PC-3 (cell line): ENCODE measurements at regions of chr9 and their contacts with region 1.

Region 1: GRCh38 chr9:111298731-111299598 is 31.1 kb downstream of the OR2K2 start:
- DNase-seq: peak; percentile 73
- ATAC-seq: peak; percentile 80
- H3K4me3 ChIP-seq: peak overlapping the region; percentile 25; the same call in 1 of the 2 replicates
- H3K27ac ChIP-seq: peak overlapping the region; percentile 75
- H3K4me1 ChIP-seq: peaks cover 19% of the 10 kb centered on the region
- H3K27me3 ChIP-seq: no peaks in the 10 kb centered on the region
- CTCF ChIP-seq: peak; percentile 78

Region 2: DNA sequence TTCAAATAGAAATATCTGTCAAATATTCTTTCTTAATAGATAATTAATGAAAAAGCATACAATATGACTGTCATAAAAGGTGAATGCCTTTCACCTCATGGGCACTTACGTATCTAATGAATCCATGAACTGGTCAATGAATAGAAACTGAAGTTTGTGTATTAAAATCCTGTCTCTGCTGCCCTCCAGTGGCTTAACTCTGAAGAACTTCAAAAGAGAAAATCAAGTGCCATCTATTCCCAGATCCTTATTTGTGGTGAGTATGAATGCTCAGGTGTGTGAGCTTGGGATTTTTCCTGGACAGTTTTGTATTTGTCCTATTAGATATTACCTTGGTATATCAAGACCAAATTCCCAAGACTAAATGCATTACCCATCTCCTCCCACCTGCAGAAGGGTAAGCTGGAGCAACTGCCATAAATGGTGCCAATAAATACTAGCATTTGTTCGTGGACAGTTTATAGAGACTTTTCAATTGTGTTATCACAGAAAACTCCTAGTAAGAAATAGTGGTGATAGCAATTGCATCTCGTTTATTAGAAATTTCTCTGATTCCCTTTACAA is 675.4 kb before region 1 on chr9:
- CTCF ChIA-PET with region 1: no interaction called
- POLR2A ChIA-PET with region 1: no interaction called
- intact Hi-C with region 1: loop called (anchors 5 kb)
- DNase-seq: peak; percentile 79
- ATAC-seq: peak; percentile 56
- H3K4me3 ChIP-seq: no peak overlapping the region
- H3K27ac ChIP-seq: no peak overlapping the region
- H3K4me1 ChIP-seq: peaks cover 13% of the 10 kb centered on the region
- H3K27me3 ChIP-seq: no peaks in the 10 kb centered on the region
- CTCF ChIP-seq: peak; percentile 70

Region 3: GRCh38 chr9:110744753-110745384 is 554.1 kb before region 1 on chr9:
- CTCF ChIA-PET with region 1: no interaction called
- POLR2A ChIA-PET with region 1: no interaction called
- intact Hi-C with region 1: loop called (anchors 2 kb)
- DNase-seq: peak; percentile 91
- ATAC-seq: peak; percentile 86
- H3K4me3 ChIP-seq: peak overlapping the region; percentile 42; the same call in 1 of the 2 replicates
- H3K27ac ChIP-seq: peak overlapping the region; percentile 91
- H3K4me1 ChIP-seq: peaks cover 51% of the 10 kb centered on the region
- H3K27me3 ChIP-seq: no peaks in the 10 kb centered on the region
- CTCF ChIP-seq: no peak

Region 4: DNA sequence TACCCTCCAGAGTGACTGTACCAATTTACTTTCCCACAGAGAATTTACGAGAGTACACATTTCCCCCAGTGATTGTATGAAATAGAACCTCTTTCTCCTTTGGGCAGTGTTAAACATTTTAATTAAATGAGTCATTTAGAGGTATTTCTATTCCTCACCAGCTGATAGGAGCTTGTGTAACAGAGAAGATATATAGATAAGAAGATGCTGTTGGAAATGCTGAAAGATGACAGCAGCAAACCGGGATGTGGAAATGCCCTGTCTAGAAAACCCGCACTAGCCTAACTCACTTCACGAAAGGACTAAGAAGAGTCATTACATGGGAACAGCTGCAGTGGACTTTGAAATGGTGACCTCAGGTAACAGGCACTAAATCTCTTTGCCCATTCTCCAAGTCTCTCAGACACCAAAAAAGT is 329.0 kb before region 1 on chr9:
- CTCF ChIA-PET with region 1: no interaction called
- POLR2A ChIA-PET with region 1: no interaction called
- intact Hi-C with region 1: loop called (anchors 5 kb)
- DNase-seq: peak; percentile 82
- ATAC-seq: peak; percentile 85
- H3K4me3 ChIP-seq: no peak overlapping the region
- H3K27ac ChIP-seq: peak overlapping the region; percentile 79
- H3K4me1 ChIP-seq: peaks cover 24% of the 10 kb centered on the region
- H3K27me3 ChIP-seq: no peaks in the 10 kb centered on the region
- CTCF ChIP-seq: no peak

Region 5: DNA sequence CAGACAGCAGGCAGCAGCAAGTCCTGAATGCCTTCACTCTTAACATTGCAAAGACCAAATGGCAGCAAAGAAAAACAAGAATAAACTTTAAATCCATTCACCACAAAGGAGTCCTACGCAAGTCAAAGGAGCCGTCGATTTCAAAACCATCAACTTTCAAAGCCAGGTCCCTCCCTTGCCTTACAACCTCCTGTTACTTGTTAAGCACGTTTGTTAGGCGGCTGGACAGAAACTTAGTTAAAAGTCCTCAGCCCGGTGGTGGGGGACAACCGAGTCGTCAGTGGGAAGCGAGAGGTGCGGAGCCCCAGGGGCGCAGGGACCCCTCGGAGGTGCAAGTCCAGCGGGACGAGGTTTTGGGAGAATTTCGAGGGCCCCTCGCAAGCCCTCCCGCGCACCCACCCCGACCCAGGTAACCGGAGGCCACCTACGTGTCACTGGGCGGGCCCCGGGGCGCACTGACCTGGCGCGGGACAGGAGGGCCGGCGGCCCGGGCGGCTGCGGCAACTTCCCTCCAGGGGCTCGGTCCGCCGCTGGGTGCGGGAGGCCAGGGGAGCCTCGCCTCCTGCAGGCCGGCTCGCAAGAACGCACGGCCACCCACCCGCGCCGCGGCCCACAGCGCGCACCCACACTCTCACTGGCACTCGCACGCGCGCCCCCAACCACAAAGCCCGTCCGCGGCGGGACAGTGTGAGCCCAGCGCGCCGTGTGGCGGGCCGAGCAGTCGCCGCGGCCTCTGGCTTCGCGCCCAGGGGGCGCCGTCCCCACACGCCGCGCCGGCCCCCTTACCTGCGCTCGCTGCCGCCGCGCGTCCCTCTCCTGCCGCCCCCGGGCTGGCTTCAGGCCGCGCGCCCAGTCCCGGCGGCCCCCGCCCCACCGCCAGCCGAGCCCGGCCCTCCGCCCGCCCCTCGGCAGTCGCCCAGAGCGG is 261.3 kb before region 1 on chr9:
- CTCF ChIA-PET with region 1: interaction called, 3 read pairs
- POLR2A ChIA-PET with region 1: no interaction called
- intact Hi-C with region 1: loop called (anchors 2 kb)
- DNase-seq: peak; percentile 42
- ATAC-seq: peak; percentile 39
- H3K4me3 ChIP-seq: peak overlapping the region; percentile 83
- H3K27ac ChIP-seq: peak overlapping the region; percentile 66
- H3K4me1 ChIP-seq: peaks cover 37% of the 10 kb centered on the region
- H3K27me3 ChIP-seq: no peaks in the 10 kb centered on the region
- CTCF ChIP-seq: no peak

Region 6: DNA sequence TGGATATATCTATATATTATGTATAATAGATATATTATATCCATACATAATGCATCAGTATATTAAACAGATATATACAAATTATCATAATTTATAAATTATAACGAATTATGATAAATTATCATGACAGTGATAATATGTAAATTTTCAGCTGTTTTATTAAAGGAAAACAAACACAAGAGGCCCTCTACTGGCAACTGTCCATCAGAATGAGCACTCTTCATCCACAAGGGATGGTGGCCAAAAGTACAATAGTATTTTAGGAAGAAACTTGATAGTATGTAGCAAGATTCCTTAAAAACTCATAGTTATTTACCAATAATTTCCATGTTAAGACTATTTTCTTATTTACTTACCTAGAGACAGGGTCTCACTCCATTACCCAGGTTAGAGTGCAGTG is 147.4 kb before region 1 on chr9:
- CTCF ChIA-PET with region 1: no interaction called
- POLR2A ChIA-PET with region 1: no interaction called
- intact Hi-C with region 1: no loop called
- DNase-seq: peak; percentile 13
- ATAC-seq: no peak
- H3K4me3 ChIP-seq: no peak overlapping the region
- H3K27ac ChIP-seq: no peak overlapping the region
- H3K4me1 ChIP-seq: no peaks in the 10 kb centered on the region
- H3K27me3 ChIP-seq: no peaks in the 10 kb centered on the region
- CTCF ChIP-seq: no peak